Dorsolateral prefrontal cortex (tissue), 120 donors: ENCODE measurements at regions of chr13 and their contacts with region 1.

Region 1: GRCh38 chr13:43933378-43933777 is 53.7 kb downstream of the LACC1 start:
- DNase-seq: no peak
- H3K4me3 ChIP-seq: no peak overlapping the region
- H3K27ac ChIP-seq: no peak overlapping the region
- H3K27me3 ChIP-seq: no peaks in the 10 kb centered on the region
- CTCF ChIP-seq: no peak

Region 2: DNA sequence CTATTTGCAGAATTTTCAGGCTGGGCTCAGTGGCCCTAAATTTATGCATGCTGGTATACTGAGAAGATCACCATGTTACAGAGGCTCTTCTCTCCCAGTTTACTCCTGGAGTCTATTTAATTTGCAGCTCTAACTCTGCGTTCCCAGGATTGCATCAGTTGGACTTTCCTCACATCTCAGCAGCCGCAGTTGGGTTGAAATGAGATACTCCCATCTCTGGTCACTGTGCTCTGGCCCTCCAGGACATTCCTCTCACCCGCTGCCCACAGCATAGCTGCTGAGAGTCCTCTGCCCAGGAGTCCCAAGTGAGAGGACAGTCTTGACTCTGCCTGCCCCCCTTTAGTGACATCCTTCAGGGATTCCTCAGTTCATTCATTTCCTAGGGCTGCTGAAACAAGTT is 97.2 kb after region 1 on chr13:
- intact Hi-C with region 1: loop called in 1 of 2 experiments (anchors 10 kb)
- DNase-seq: no peak
- H3K4me3 ChIP-seq: no peak overlapping the region
- H3K27ac ChIP-seq: no peak overlapping the region
- H3K27me3 ChIP-seq: no peaks in the 10 kb centered on the region
- CTCF ChIP-seq: no peak